ENCODE measurements at regions of chr5 and their contacts with region 1.

Region 1: GRCh38 chr5:149656576-149657182 is 73.4 kb upstream of the PPARGC1B start:
- DNase-seq: peak; percentile 58
- CTCF ChIP-seq: peak; percentile 52

Region 2: GRCh38 chr5:149636851-149637246 is 19.8 kb before region 1 on chr5:
- CTCF ChIA-PET with region 1: interaction called, 17 read pairs
- POLR2A ChIA-PET with region 1: no interaction called
- DNase-seq: peak; percentile 73
- CTCF ChIP-seq: peak; percentile 89

Region 3: GRCh38 chr5:149667084-149667828 is 10.6 kb after region 1 on chr5:
- CTCF ChIA-PET with region 1: interaction called, 41 read pairs
- POLR2A ChIA-PET with region 1: no interaction called
- DNase-seq: peak; percentile 60
- CTCF ChIP-seq: peak; percentile 76

Region 4: GRCh38 chr5:149828161-149828884 is 171.6 kb after region 1 on chr5:
- CTCF ChIA-PET with region 1: interaction called, 86 read pairs
- POLR2A ChIA-PET with region 1: interaction called, 5 read pairs
- DNase-seq: peak; percentile 84
- CTCF ChIP-seq: peak; percentile 82

Region 5: GRCh38 chr5:149834246-149834855 is 177.7 kb after region 1 on chr5:
- CTCF ChIA-PET with region 1: interaction called, 86 read pairs
- POLR2A ChIA-PET with region 1: interaction called, 5 read pairs
- DNase-seq: peak; percentile 77
- CTCF ChIP-seq: peak; percentile 43

Region 6: DNA sequence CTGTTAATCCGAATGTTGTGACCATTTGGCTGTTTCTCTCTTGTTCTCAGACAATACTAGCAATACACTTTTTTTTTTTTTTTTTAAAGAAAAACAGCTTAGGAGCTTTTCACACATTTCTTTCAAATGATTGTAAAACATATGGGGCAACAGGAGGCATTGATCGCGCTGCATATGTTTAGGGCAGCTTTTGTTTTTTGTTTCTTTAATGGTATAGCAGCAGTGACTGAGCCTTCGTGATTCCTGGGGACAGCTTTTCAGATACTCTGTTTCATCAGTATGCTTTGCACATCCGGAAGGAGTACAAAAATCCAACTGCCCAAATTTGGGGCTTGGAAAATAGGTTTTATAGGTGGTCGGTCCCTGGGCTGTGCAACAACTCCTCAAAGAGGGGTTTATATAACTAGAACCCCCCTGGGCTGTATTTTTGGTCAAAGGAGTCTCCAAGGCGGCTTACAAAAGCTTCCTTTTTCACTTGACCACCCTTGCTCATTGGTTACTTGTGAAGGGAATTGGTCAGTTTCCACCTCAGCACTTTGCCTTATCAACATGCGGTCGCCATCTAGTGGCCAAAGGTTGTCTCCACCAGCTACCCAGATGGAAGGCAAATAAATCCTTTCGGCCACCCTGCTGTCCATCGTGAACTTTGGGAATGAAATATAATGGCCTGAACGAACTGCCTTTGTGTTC is 196.1 kb after region 1 on chr5:
- CTCF ChIA-PET with region 1: interaction called, 20 read pairs
- POLR2A ChIA-PET with region 1: no interaction called
- DNase-seq: peak; percentile 71
- CTCF ChIP-seq: peak; percentile 87